Posterior vena cava (tissue), 2 donors: ENCODE measurements at regions of chr9 and their contacts with region 1.

Region 1: DNA sequence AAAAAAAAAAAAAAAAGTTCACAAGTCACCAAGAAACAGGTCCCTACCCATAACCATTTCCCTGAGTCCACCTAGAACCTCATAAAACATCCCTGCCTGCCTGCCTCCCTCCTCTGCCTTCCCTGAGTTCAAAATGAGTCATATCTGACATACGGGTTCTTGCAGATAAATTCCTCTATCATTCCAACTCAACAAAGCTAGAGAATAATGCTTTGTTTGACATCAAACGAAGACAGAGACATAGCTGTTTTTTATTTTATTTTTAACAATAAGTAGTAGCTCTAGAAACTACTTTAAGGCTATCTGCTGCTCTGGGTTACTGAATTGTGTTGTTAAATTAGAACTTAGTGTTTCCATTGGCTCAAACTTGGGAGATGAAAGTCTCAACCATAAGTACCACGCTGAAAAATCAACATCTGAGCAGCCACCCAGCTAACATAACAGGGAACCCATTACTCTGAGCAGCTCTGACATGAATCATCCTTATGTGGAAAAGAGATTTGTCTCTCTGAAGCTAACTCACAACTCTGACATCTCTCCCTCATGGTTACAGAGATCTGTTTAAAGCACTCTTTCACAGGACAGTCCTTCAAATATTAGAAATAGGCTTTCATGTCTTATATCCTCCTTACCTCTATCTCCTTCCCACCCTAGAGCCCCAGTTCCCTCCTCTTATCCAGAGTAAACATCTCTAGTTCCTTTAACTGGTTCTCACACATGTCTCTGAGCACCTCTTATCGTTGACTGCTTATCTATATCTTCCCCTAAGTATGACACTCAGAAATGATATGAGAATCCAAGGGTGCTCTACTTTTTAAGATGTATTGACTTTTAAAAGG is 12.1 kb downstream of the TMEM245 start:
- DNase-seq: no peak

Region 2: GRCh38 chr9:109868207-109868606 is 760.6 kb after region 1 on chr9:
- intact Hi-C with region 1: loop called in 1 of 2 experiments (anchors 5 kb)
- DNase-seq: no peak